ENCODE measurements at regions of chr6 and their contacts with region 1.

Region 1: DNA sequence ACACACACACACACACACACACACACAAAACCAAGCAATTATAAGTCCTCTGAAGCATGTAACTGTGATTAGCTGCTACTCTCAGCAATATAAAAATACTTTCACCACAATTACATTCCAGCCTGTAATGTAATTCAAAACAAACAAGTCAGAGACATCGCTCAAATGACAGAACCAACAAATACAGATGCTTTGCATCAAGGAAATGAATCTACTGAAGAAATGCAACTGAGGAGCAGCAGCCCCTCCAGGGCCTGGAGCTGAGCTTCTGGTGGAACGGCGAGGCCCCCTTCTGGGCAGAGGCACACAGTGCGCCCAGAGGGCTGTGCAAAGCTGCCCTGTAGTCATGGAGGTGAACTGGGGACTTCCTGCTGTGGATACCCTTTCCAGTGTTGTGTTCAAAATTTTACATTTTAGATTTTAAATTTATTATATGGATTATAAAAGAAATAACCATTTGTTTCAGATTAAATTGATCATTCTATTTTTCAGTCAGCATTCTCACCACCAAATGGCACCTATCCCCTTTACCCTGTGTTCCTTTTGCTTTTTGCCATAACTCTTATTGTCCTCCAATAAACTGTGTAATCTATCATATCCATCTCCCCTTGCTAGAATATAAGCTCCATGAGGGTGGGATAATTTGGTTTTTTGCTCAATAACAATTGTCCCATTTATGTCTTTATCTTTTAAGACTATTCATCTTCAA is 23.2 kb downstream of the ADAT2 start:
- DNase-seq: peak; percentile 92
- H3K4me3 ChIP-seq: no peak overlapping the region
- H3K27ac ChIP-seq: no peak overlapping the region
- H3K4me1 ChIP-seq: peaks cover 0 to 6% (median 0%) of the 10 kb centered on the region in 6 donors
- H3K27me3 ChIP-seq: no peaks in the 10 kb centered on the region
- CTCF ChIP-seq: peak; percentile 75 to 96 (median 91)
- POLR2A ChIP-seq: no peak

Region 2: GRCh38 chr6:142566628-142567396 is 860.5 kb before region 1 on chr6:
- intact Hi-C with region 1: loop called (anchors 5 kb)
- DNase-seq: no peak
- H3K4me3 ChIP-seq: no peak overlapping the region
- H3K27ac ChIP-seq: no peak overlapping the region
- H3K4me1 ChIP-seq: peaks cover 0 to 11% (median 0%) of the 10 kb centered on the region in 6 donors
- H3K27me3 ChIP-seq: no peaks in the 10 kb centered on the region
- CTCF ChIP-seq: peak; percentile 36 to 84 (median 67)
- POLR2A ChIP-seq: no peak

Region 3: DNA sequence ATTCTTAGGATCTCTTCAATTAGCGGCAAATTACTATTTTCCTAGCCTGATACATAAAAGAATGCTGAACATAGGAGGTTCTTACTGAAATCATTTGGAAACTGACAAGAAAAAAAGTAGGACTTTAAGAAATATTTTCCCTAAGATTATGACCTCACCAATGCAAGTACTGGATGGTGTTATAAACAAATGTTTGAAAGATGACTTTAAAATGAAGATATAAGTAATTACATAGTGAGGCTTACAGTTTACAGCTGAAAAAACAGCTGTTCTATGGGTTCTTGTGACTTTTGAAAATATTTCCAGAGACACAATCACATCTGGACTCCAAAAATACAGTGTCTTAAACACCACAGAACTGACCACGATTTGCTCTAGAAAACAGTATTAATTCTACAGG is 41.6 kb before region 1 on chr6:
- intact Hi-C with region 1: no loop called
- DNase-seq: no peak
- H3K4me3 ChIP-seq: no peak overlapping the region
- H3K27ac ChIP-seq: no peak overlapping the region
- H3K4me1 ChIP-seq: no peaks in the 10 kb centered on the region
- H3K27me3 ChIP-seq: peaks cover 0 to under 1% (median 0%) of the 10 kb centered on the region in 7 donors
- CTCF ChIP-seq: no peak
- POLR2A ChIP-seq: no peak

Region 4: GRCh38 chr6:143607974-143608373 is 180.7 kb after region 1 on chr6:
- intact Hi-C with region 1: no loop called
- DNase-seq: no peak
- H3K4me3 ChIP-seq: no peak overlapping the region
- H3K27ac ChIP-seq: no peak overlapping the region
- H3K4me1 ChIP-seq: peaks cover 6 to 19% (median 14%) of the 10 kb centered on the region in 6 donors
- H3K27me3 ChIP-seq: no peaks in the 10 kb centered on the region
- CTCF ChIP-seq: no peak
- POLR2A ChIP-seq: no peak

Measured in spleen (tissue), 13 donors.